ENCODE measurements at regions of chr1 and their contacts with region 1.

Region 1: GRCh38 chr1:21937372-21938221 is 487 bp upstream of the HSPG2 start:
- DNase-seq: peak; percentile 79
- H3K4me3 ChIP-seq: peak overlapping the region; percentile 15 to 33 (median 18)
- H3K27ac ChIP-seq: peak overlapping the region; percentile 41
- H3K4me1 ChIP-seq: peaks cover 56% of the 10 kb centered on the region
- H3K27me3 ChIP-seq: no peaks in the 10 kb centered on the region
- CTCF ChIP-seq: no peak

Region 2: GRCh38 chr1:21869620-21870121 is 67.9 kb before region 1 on chr1:
- CTCF ChIA-PET with region 1: no interaction called
- dilution Hi-C with region 1: no loop called
- in situ Hi-C with region 1: no loop called
- intact Hi-C with region 1: loop called (anchors 2 kb)
- DNase-seq: peak; percentile 95
- H3K4me3 ChIP-seq: no peak overlapping the region
- H3K27ac ChIP-seq: peak overlapping the region; percentile 5
- H3K4me1 ChIP-seq: peaks cover 40% of the 10 kb centered on the region
- H3K27me3 ChIP-seq: no peaks in the 10 kb centered on the region
- CTCF ChIP-seq: no peak

Region 3: GRCh38 chr1:21919520-21919919 is 18.1 kb before region 1 on chr1:
- CTCF ChIA-PET with region 1: interaction called, 31 read pairs
- dilution Hi-C with region 1: no loop called
- in situ Hi-C with region 1: no loop called
- intact Hi-C with region 1: no loop called
- DNase-seq: peak; percentile 78
- H3K4me3 ChIP-seq: no peak overlapping the region
- H3K27ac ChIP-seq: no peak overlapping the region
- H3K4me1 ChIP-seq: peaks cover 26% of the 10 kb centered on the region
- H3K27me3 ChIP-seq: no peaks in the 10 kb centered on the region
- CTCF ChIP-seq: no peak

Measured in mammary epithelial cell (primary cell).